Heart right ventricle (tissue), 16 donors: ENCODE measurements at regions of chr19 and their contacts with region 1.

Region 1: DNA sequence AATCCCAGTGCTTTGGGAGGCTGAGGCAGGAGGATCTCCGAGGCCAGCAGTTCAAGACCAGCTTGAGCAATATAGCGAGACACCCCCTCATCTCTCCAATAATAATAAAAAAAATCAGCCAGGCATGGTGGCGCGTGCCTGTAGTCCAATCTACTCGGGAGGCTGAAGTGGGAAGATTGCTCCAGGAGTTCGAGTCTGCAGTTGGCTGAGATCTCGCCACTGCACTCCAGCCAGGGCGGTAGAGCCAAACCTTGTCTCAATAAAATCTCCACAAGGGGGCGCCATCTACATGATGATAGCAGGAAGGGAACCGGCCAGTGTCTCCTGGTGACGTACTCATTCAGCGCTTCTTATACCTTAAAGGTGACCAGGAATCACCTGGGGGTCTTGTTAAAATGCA is 13.6 kb upstream of the C5AR1 start:
- DNase-seq: peak; percentile 32 to 83
- ATAC-seq: peak; percentile 67 to 88 (median 85)
- H3K4me3 ChIP-seq: no peak overlapping the region
- H3K27ac ChIP-seq: no peak overlapping the region
- H3K4me1 ChIP-seq: peaks cover 0 to 5% (median 0%) of the 10 kb centered on the region in 9 donors
- H3K27me3 ChIP-seq: no peaks in the 10 kb centered on the region
- CTCF ChIP-seq: peak; percentile 57 to 85 (median 76)

Region 2: GRCh38 chr19:47330466-47330869 is 34.4 kb after region 1 on chr19:
- intact Hi-C with region 1: no loop called
- DNase-seq: no peak
- ATAC-seq: peak in 7 of 8 donors; percentile 59 to 85 (median 74)
- H3K4me3 ChIP-seq: peak overlapping the region in 7 of 10 donors; percentile 7 to 40 (median 22)
- H3K27ac ChIP-seq: peak overlapping the region in 8 of 10 donors; percentile 36 to 91 (median 72)
- H3K4me1 ChIP-seq: peaks cover 0 to 43% (median 0%) of the 10 kb centered on the region in 9 donors
- H3K27me3 ChIP-seq: peaks cover 0 to 27% (median 0%) of the 10 kb centered on the region in 7 donors
- CTCF ChIP-seq: no peak

Region 3: GRCh38 chr19:47428177-47428894 is 132.3 kb after region 1 on chr19:
- intact Hi-C with region 1: loop called in 3 of 10 experiments (anchors 10 kb)
- DNase-seq: peak; percentile 80 to 90
- ATAC-seq: peak; percentile 78 to 94 (median 87)
- H3K4me3 ChIP-seq: peak overlapping the region in 2 of 10 donors; percentile 10 to 15
- H3K27ac ChIP-seq: no peak overlapping the region
- H3K4me1 ChIP-seq: peaks cover 7 to 27% (median 21%) of the 10 kb centered on the region in 9 donors
- H3K27me3 ChIP-seq: peaks cover 9 to 93% (median 75%) of the 10 kb centered on the region in 7 donors
- CTCF ChIP-seq: no peak

Region 4: DNA sequence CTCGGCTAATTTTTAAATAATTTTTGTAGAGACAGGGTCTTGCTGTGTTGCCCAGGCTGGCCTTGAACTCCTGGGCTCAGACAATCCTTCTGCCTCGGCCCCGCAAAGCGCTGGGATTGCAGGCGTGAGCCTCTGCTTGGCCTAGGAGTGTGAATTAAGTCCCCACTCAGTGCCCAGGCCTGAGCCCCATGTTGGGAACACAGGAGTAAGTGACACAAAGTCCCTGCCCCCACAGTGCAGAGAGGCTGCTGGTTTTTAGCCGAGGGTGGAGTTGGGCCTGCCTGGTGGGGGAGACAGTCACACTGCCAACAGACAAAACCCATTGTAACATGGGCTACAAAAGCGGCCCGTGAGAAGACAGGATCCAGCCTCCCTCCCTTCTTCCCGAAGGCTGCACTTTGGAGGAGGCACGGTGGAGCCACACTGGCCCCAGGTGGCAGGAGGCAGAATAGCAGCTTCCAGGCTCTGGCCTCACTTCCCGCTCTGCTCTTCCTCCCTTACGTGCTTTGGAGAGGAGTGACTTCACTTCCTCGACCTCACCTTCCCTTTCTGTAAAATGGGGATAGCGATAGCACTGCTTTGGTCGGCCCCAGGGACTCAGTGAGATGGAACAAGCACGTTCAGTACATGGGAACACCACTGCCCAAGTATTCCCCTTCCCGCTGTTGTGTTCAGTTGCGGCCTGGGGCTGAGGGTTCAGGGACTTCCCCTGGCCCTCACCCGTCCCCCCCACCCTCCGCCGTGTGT is 402.0 kb after region 1 on chr19:
- intact Hi-C with region 1: loop called in 3 of 10 experiments (anchors 5 to 10 kb)
- DNase-seq: peak; percentile 73 to 75
- ATAC-seq: peak; percentile 79 to 90 (median 84)
- H3K4me3 ChIP-seq: no peak overlapping the region
- H3K27ac ChIP-seq: peak overlapping the region in 7 of 10 donors; percentile 25 to 73 (median 66)
- H3K4me1 ChIP-seq: peaks cover 0 to 10% (median 6%) of the 10 kb centered on the region in 9 donors
- H3K27me3 ChIP-seq: no peaks in the 10 kb centered on the region
- CTCF ChIP-seq: peak; percentile 91 to 99 (median 96)

Region 5: GRCh38 chr19:47707135-47707925 is 411.3 kb after region 1 on chr19:
- intact Hi-C with region 1: loop called in 2 of 10 experiments (anchors 5 to 10 kb)
- DNase-seq: peak; percentile 58 to 68
- ATAC-seq: peak; percentile 61 to 87 (median 82)
- H3K4me3 ChIP-seq: no peak overlapping the region
- H3K27ac ChIP-seq: no peak overlapping the region
- H3K4me1 ChIP-seq: no peaks in the 10 kb centered on the region
- H3K27me3 ChIP-seq: peaks cover 0 to 12% (median 0%) of the 10 kb centered on the region in 7 donors
- CTCF ChIP-seq: peak; percentile 52 to 84 (median 77)